A673 (cell line): ENCODE measurements at regions of chr1 and their contacts with region 1.

Region 1: DNA sequence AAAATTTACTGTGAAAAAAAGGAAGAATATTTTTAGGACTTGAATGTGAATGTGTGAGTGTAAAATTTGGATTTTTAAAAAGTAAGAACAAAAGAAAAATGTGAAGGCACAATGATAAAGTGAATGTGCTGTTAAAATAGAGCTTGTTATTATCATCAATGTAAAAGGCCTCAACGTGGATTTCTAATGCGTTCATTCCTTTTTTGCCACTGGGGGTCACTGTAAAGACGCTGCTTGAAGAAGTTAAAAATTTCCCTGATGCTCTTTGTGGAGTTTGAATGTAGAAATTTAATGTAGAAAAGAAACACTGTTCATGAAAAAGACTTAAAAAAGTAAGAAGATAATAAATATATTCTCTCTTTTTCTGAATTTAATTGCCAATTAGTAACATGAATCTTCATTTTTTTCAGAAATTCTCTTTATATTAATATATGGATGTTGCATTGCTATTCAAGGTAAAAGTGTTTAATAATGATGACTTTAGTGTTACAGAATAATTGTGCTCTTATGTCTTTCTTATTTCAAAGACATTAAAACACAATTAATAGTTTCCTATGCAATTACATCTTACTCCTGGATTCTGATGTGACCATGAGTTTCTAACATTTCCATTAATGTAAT is 161.5 kb downstream of the DNM3 start:
- DNase-seq: peak; percentile 83
- H3K4me3 ChIP-seq: no peak overlapping the region
- H3K27ac ChIP-seq: no peak overlapping the region
- H3K4me1 ChIP-seq: no peaks in the 10 kb centered on the region
- H3K27me3 ChIP-seq: no peaks in the 10 kb centered on the region
- CTCF ChIP-seq: peak; percentile 86

Region 2: GRCh38 chr1:171434717-171435346 is 568.0 kb before region 1 on chr1:
- CTCF ChIA-PET with region 1: no interaction called
- POLR2A ChIA-PET with region 1: no interaction called
- intact Hi-C with region 1: no loop called
- DNase-seq: peak; percentile 90
- H3K4me3 ChIP-seq: peak overlapping the region; percentile 13
- H3K27ac ChIP-seq: peak overlapping the region; percentile 79
- H3K4me1 ChIP-seq: peaks cover 28% of the 10 kb centered on the region
- H3K27me3 ChIP-seq: no peaks in the 10 kb centered on the region
- CTCF ChIP-seq: no peak

Region 3: GRCh38 chr1:171758011-171758410 is 244.8 kb before region 1 on chr1:
- CTCF ChIA-PET with region 1: no interaction called
- POLR2A ChIA-PET with region 1: no interaction called
- intact Hi-C with region 1: no loop called
- DNase-seq: no peak
- H3K4me3 ChIP-seq: no peak overlapping the region
- H3K27ac ChIP-seq: no peak overlapping the region
- H3K4me1 ChIP-seq: no peaks in the 10 kb centered on the region
- H3K27me3 ChIP-seq: no peaks in the 10 kb centered on the region
- CTCF ChIP-seq: no peak

Region 4: GRCh38 chr1:172429331-172430127 is 426.7 kb after region 1 on chr1:
- CTCF ChIA-PET with region 1: interaction called, 4 read pairs
- POLR2A ChIA-PET with region 1: no interaction called
- intact Hi-C with region 1: loop called (anchors 2 kb)
- DNase-seq: peak; percentile 82
- H3K4me3 ChIP-seq: no peak overlapping the region
- H3K27ac ChIP-seq: no peak overlapping the region
- H3K4me1 ChIP-seq: no peaks in the 10 kb centered on the region
- H3K27me3 ChIP-seq: no peaks in the 10 kb centered on the region
- CTCF ChIP-seq: peak; percentile 92

Region 5: DNA sequence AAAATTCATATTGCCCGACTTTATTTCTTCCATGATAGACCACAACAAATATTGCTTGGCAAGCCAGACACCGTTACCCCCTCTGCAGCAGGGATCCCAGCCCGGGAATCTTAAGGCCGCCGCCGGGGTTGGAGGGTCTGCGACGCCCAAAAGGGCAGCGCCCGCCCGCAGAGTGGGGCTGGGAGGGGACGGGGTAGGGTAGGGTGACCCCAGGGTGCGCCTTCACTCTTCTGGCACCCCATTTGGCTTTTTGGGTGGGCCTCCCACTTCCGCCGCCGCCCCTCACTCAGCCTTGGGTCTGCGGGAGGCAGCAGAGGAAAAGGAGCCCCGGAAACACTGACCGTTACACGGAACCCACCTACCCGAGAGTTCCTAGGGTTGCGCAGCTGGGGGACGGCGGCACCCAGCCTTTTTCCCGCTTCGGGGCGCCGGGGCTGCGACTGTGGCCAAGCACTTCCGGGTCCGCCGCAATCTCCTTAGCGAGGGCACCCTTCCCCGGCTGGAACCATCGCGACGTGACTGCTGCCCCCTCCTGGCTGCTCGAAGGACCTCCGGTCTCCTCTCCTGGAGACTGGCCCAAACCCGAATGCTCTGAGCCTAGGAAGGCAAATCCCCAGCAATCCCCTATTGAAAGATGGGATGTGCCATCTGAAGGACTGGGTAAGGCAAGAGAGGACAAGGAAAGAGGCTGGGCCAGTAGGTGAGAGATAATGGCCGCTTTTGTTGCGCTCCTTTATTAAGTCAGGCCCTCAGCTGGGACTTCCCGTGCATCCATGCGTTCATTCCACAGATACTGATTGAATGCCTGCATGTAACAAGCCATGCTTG is 441.0 kb after region 1 on chr1 and contains the start of gene PIGC:
- CTCF ChIA-PET with region 1: interaction called, 4 read pairs
- POLR2A ChIA-PET with region 1: no interaction called
- intact Hi-C with region 1: loop called (anchors 1 kb)
- DNase-seq: peak; percentile 94
- H3K4me3 ChIP-seq: peak within 1 kb of the TSS; percentile 86
- H3K27ac ChIP-seq: peak within 1 kb of the TSS; percentile 91
- H3K4me1 ChIP-seq: peaks cover 6% of the 10 kb centered on the region
- H3K27me3 ChIP-seq: no peaks in the 10 kb centered on the region
- CTCF ChIP-seq: peak; percentile 97
- total RNA-seq, gene PIGC: 21.0 and 23.6 TPM in 2 replicates